Head of caudate nucleus (tissue), 42 donors: ENCODE measurements at regions of chr1 and their contacts with region 1.

Region 1: GRCh38 chr1:174769961-174770549 is 229.7 kb upstream of the CACYBP start:
- DNase-seq: peak in 8 of 42 donors; percentile 9 to 65 (median 32)

Region 2: DNA sequence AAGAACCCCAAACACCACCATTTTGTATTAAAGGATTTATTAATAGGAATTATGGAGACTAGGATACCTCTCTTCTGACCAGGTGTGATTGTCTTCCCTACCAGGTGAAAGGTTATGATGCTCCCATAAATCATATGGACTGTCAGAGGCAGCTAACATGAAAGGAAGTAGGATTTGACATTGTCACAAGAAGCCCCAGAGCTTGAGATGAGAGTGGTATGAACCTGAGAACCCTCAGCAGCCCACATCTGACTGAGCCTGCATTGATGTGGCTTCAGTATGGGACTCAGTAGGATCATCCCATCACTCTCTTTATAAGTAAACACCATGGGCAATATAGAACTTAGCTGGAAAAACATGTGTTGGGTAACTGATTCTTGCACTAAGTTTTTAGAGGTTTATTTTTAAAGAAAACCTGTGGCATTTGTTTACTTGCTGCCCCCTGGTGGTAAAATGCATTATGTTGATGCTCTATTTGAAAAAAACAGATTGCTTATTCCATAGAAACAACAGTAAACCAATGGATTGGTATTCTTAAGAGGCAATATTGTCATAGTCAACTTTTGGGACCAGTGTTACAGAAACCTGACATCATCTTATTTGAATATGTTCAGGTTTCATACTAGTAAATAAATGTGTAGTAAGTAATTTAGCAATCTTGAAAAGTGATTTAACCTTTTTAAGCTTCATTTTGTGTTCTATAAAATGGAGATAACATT is 213.1 kb after region 1 on chr1:
- intact Hi-C with region 1: loop called (anchors 5 kb)
- DNase-seq: peak in 5 of 42 donors; percentile 21 to 75 (median 48)